ENCODE measurements at regions of chrX and their contacts with region 1.

Region 1: DNA sequence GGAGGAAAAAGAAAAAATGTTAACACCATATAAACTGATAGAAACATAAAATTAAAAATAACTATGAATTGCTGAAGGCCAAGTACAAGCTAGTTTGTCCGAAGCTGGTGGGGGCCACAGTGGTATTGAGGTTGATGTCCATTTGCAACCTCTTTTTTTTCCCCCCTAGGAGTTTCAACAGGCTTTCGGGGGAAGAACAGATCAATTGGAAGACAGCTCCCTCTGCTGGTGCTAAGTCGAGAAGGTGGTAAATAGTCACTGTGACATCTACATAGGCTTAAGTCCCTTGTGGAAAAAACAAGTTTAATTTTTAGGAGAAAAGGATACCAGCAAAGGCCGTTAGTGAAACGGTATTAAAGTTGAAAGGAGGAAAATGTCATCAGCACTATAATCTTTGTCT is 115.7 kb upstream of the ZXDA start:
- DNase-seq: peak in 7 of 9 experiments; percentile 1 to 58 (median 33)
- ATAC-seq: no peak
- H3K4me3 ChIP-seq: no peak overlapping the region
- H3K4me3 Mint-ChIP-seq: no peak overlapping the region
- H3K27ac ChIP-seq: no peak overlapping the region
- H3K27ac Mint-ChIP-seq: no peak overlapping the region
- H3K4me1 ChIP-seq: peaks cover 6% of the 10 kb centered on the region
- H3K4me1 Mint-ChIP-seq: no peaks in the 10 kb centered on the region
- H3K27me3 ChIP-seq: no peaks in the 10 kb centered on the region
- H3K27me3 Mint-ChIP-seq: no peaks in the 10 kb centered on the region
- CTCF ChIP-seq: peak; percentile 26

Region 2: DNA sequence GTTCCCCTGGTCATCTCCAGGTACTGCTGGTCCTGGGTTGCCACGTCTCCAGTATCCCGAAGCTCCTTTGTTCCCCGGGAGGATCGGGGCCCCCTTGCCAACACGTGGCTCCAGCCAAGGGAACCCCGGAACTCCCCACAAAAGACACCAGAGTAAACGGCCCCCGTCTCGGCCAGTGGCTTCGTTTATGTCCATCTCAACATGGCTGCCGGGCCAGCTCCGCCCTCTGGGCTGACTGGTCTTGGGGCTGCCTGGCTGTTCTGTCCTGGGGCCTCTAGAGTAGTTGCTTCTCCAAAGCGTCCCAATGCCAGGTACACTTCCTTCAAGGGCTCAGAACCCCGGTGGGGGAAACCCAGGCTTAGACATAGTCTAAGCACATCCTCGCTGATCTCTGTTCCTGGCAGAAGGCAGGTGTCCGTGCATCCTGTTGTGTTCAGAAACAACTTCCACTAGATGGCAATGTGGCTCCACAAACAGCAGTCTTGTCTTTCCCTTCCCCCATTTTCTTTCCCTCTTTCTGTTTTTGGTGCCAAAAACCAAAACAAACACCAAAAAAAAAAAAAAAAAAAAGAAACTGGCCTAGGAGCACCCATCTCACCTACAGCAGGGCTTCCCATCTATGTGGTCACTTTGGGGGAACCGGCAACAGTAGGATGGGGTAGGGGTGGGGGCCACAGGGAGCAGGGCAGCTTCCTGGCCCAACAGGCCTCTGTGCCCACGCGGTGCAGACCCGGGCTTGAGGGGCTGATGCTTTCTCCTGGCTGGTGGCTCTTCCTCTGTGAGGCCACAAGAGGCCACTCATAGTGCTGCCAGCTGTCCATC is 1261.6 kb before region 1 on chrX:
- CTCF ChIA-PET with region 1: no interaction called
- POLR2A ChIA-PET with region 1: no interaction called
- intact Hi-C with region 1: loop called in 1 of 2 experiments (anchors 5 kb)
- DNase-seq: peak; percentile 37 to 90 (median 62)
- ATAC-seq: peak; percentile 69
- H3K4me3 ChIP-seq: peak overlapping the region in 1 of 2 experiments; percentile 35
- H3K4me3 Mint-ChIP-seq: peak overlapping the region; percentile 70
- H3K27ac ChIP-seq: peak overlapping the region; percentile 37 to 69
- H3K27ac Mint-ChIP-seq: peak overlapping the region; percentile 91
- H3K4me1 ChIP-seq: peaks cover 40% of the 10 kb centered on the region
- H3K4me1 Mint-ChIP-seq: peaks cover 42% of the 10 kb centered on the region
- H3K27me3 ChIP-seq: no peaks in the 10 kb centered on the region
- H3K27me3 Mint-ChIP-seq: no peaks in the 10 kb centered on the region
- CTCF ChIP-seq: peak; percentile 47

Region 3: GRCh38 chrX:57528670-57529255 is 497.2 kb before region 1 on chrX:
- CTCF ChIA-PET with region 1: no interaction called
- POLR2A ChIA-PET with region 1: no interaction called
- intact Hi-C with region 1: loop called in 1 of 2 experiments (anchors 5 kb)
- DNase-seq: peak in 2 of 9 experiments; percentile 13 to 31
- ATAC-seq: no peak
- H3K4me3 ChIP-seq: no peak overlapping the region
- H3K4me3 Mint-ChIP-seq: no peak overlapping the region
- H3K27ac ChIP-seq: no peak overlapping the region
- H3K27ac Mint-ChIP-seq: no peak overlapping the region
- H3K4me1 ChIP-seq: no peaks in the 10 kb centered on the region
- H3K4me1 Mint-ChIP-seq: no peaks in the 10 kb centered on the region
- H3K27me3 ChIP-seq: no peaks in the 10 kb centered on the region
- H3K27me3 Mint-ChIP-seq: no peaks in the 10 kb centered on the region
- CTCF ChIP-seq: no peak

Region 4: DNA sequence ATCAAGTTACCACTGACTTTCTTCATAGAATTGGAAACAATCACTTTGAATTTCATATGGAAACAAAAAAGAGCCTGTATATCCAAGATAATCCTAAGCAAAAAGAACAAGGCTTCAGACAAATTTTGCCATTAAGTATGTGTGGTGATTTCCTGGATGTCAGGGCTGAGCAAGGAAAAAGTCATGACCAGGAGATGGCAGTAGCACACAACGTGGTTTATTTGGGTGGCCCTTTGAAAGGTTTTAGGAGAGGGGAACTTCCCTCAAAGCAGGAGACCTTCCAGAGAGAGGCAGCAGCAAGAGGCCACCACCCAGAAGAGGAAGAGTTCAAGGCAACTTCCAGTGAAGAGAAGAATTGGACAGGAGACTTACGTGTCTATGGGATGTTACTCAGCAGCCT is 452.2 kb before region 1 on chrX:
- CTCF ChIA-PET with region 1: interaction called, 3 read pairs
- POLR2A ChIA-PET with region 1: no interaction called
- intact Hi-C with region 1: loop called (anchors 2 to 10 kb)
- DNase-seq: peak in 4 of 9 experiments; percentile 8 to 52 (median 26)
- ATAC-seq: no peak
- H3K4me3 ChIP-seq: no peak overlapping the region
- H3K4me3 Mint-ChIP-seq: no peak overlapping the region
- H3K27ac ChIP-seq: no peak overlapping the region
- H3K27ac Mint-ChIP-seq: no peak overlapping the region
- H3K4me1 ChIP-seq: no peaks in the 10 kb centered on the region
- H3K4me1 Mint-ChIP-seq: no peaks in the 10 kb centered on the region
- H3K27me3 ChIP-seq: no peaks in the 10 kb centered on the region
- H3K27me3 Mint-ChIP-seq: no peaks in the 10 kb centered on the region
- CTCF ChIP-seq: no peak

Region 5: DNA sequence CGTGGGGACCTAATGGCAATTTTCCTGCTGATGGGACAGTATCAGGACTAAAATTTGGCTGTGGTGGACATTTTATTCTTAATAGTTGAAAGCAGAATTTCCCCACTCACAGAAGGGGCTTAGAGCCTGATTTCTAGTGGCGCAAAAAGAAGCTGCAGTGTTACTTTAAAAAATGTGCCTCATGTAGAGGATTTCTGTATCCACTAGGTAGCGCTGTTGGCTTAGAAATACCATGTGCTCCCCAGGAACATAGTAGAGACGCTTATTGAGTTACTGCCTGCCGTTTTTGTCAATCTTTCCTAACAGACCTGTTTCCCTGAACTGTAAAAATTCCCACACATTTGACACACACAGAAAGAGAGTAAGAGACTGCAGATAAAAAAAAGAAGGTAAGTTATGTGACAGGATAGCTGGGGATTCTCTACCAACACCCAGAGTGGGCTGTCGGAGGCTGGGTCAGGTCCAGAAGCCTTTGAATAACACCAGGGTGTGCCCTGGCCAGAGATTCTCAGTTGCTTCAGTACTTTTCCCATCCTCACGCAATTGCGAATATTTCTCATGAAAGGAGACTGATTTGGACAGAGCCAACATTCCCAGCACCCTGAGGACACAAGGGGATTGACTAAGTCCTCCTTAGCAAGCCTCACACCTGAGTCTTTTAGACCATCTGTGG is 204.1 kb before region 1 on chrX:
- CTCF ChIA-PET with region 1: interaction called, 10 read pairs
- POLR2A ChIA-PET with region 1: no interaction called
- intact Hi-C with region 1: loop called (anchors 1 kb)
- DNase-seq: peak in 6 of 9 experiments; percentile 0 to 69 (median 18)
- ATAC-seq: peak; percentile 48
- H3K4me3 ChIP-seq: no peak overlapping the region
- H3K4me3 Mint-ChIP-seq: peak overlapping the region; percentile 16
- H3K27ac ChIP-seq: no peak overlapping the region
- H3K27ac Mint-ChIP-seq: no peak overlapping the region
- H3K4me1 ChIP-seq: no peaks in the 10 kb centered on the region
- H3K4me1 Mint-ChIP-seq: peaks cover 2% of the 10 kb centered on the region
- H3K27me3 ChIP-seq: no peaks in the 10 kb centered on the region
- H3K27me3 Mint-ChIP-seq: peaks cover 3% of the 10 kb centered on the region
- CTCF ChIP-seq: peak; percentile 58